Right ventricle myocardium inferior (tissue), 1 donor: ENCODE measurements at regions of chr19 and their contacts with region 1.

Region 1: GRCh38 chr19:33905937-33906576 is 109.4 kb downstream of the KCTD15 start:
- DNase-seq: peak; percentile 85
- ATAC-seq: peak; percentile 90

Region 2: GRCh38 chr19:32859591-32859990 is 1046.5 kb before region 1 on chr19:
- intact Hi-C with region 1: no loop called
- DNase-seq: no peak
- ATAC-seq: no peak

Region 3: GRCh38 chr19:33819880-33820781 is 85.9 kb before region 1 on chr19:
- intact Hi-C with region 1: loop called (anchors 5 kb)
- DNase-seq: peak; percentile 93
- ATAC-seq: peak; percentile 88

Region 4: DNA sequence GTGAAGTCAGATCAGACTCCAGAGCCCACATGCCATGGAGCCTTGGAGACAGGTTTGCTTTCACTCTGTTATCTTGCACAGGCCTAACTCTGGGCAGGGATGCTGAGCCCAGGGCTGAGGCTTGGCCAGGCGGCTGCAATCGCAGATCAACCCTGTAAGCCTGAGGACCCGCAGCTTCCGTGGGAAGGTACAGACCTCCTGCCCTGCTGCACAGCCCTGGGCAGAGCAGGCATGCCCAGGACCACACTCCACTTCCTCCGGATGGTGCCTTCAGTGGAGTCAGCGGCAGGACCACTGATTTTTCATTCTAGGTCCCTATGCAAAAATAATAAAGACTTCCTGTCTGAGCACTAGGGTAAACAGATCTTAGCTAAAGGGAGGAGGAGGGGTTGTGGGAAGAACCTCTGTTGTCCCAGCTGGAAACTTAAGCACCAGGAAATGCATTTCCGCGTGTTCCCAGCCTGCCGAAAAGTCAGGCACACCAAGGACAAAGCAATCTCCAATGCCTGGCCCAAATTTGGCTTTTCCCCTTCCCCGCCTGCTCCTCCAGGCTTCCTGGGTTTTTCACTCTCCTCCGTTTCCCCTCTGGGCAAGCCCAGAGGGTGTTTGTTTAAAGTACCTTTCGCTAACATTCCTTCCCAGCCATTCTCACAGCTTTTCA is 22.1 kb before region 1 on chr19:
- intact Hi-C with region 1: loop called (anchors 1 kb)
- DNase-seq: no peak
- ATAC-seq: peak; percentile 23

Region 5: GRCh38 chr19:33927789-33928457 is 21.9 kb after region 1 on chr19:
- intact Hi-C with region 1: no loop called
- DNase-seq: no peak
- ATAC-seq: no peak

Region 6: GRCh38 chr19:33998739-33999345 is 92.8 kb after region 1 on chr19:
- intact Hi-C with region 1: loop called (anchors 5 kb)
- DNase-seq: no peak
- ATAC-seq: no peak